Gastrocnemius medialis (tissue), 4 donors: ENCODE measurements at regions of chr1 and their contacts with region 1.

Region 1: GRCh38 chr1:201119206-201120197 is 7.3 kb upstream of the CACNA1S start:
- DNase-seq: peak in 1 of 2 donors; percentile 47
- ATAC-seq: peak; percentile 32 to 35
- H3K4me3 ChIP-seq: no peak overlapping the region
- H3K27ac ChIP-seq: no peak overlapping the region
- H3K4me1 ChIP-seq: peaks cover 0 to 4% of the 10 kb centered on the region in 2 donors
- H3K27me3 ChIP-seq: peaks cover 0 to 3% (median 0%) of the 10 kb centered on the region in 3 donors
- CTCF ChIP-seq: peak; percentile 49 to 68 (median 60)
- POLR2A ChIP-seq: no peak

Region 2: DNA sequence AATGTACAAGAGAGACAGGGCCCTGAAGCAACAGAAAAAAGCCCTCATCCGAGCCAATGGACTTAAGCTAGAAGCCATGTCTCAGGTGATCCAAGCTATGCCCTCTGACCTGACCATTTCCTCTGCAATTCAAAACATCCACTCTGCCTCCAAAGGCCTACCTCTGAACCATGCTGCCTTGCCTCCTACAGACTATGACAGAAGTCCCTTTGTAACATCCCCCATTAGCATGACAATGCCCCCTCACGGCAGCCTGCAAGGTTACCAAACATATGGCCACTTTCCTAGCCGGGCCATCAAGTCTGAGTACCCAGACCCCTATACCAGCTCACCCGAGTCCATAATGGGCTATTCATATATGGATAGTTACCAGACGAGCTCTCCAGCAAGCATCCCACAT is 1071.3 kb before region 1 on chr1:
- in situ Hi-C with region 1: no loop called
- intact Hi-C with region 1: no loop called
- DNase-seq: no peak
- ATAC-seq: no peak
- H3K4me3 ChIP-seq: no peak overlapping the region
- H3K27ac ChIP-seq: no peak overlapping the region
- H3K4me1 ChIP-seq: peaks cover 0 to 6% of the 10 kb centered on the region in 2 donors
- H3K27me3 ChIP-seq: peaks cover 28 to 32% (median 31%) of the 10 kb centered on the region in 3 donors
- CTCF ChIP-seq: no peak
- POLR2A ChIP-seq: no peak

Region 3: DNA sequence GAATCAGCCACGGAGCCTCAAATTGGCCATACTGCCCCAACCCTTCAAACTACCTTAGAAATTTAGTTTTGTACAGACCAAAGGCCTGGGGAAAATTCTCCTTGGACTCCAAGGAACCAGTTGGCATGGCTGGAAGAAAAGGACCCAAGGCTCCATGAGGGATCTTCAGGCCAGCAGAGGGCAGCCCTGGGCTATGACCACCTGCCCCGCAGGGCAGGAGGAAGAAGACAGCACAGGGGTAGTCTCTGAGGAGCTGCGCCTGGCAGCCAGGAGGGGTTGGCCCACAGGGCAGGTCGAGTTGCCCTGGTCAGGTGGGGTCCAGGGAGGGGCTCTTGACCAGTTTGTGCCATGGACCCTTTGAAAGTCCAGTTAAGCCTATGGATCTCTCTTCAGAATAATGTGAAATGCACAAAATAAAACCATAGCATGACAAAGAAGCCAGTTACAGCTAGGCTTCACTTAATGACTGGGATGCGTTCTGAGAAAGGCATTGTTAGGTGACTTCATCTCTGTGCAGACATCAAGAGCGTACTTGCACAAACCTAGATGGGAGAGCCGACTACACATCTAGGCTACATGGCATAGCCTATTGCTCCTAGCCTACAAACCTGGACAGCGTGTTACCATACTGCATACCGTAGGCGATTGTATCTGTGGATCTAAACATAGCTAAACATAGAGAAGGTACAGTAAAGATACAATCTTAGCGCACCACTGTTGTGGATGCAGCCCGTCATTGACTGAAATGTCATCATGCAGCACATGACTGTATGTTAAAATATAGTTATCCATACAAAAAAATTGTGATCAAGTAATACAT is 33.4 kb before region 1 on chr1:
- in situ Hi-C with region 1: loop called in 3 of 4 experiments (anchors 5 kb)
- intact Hi-C with region 1: loop called (anchors 1 kb)
- DNase-seq: peak in 1 of 2 donors; percentile 82
- ATAC-seq: peak; percentile 62 to 87
- H3K4me3 ChIP-seq: no peak overlapping the region
- H3K27ac ChIP-seq: peak overlapping the region; percentile 14 to 98 (median 96)
- H3K4me1 ChIP-seq: peaks cover 15 to 20% of the 10 kb centered on the region in 2 donors
- H3K27me3 ChIP-seq: no peaks in the 10 kb centered on the region
- CTCF ChIP-seq: peak; percentile 82 to 87 (median 85)
- POLR2A ChIP-seq: no peak